Activated naive CD4-positive, alpha-beta T cell treated with anti-CD3 and anti-CD28 coated beads, Interleukin-2, amount 10 ng/mL, durations not matched to agents 7 days and 5 days (primary cell): ENCODE measurements at regions of chr1 and their contacts with region 1.

Region 1: DNA sequence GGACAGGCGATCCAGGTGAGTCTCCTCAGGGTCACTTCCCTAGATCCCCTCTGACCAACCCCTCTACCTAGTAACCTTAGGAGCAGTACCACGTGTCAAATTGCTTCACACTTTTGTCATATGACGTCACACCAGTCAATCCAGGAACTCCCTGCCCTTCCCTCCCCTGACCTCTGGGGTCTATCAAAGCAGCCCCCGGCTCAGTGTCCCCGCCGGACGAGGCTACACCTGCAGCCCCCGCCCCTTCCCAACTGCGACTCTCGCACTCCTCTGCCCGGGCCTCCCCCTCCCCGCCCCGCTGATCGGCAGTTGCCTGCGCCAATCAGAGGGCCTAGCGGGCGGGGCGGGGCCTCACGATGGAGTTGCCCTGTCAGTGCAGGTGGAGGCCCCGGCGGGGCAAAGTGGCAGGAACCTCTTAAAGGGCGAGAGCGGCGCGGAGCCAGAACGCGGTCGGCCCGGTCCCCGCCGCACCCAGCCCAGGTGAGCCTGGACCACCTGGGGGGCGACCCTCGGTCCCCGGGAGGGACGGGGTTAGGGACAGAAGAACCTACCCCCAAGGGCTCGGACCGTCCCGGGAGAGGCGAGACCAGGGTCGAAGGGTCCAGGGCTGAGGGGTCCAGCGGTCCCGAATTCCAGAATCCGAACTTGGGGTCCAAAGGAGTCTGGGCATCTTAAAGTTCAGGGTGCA is 27.5 kb upstream of the EPB41 start:
- DNase-seq: peak; percentile 94
- H3K4me3 Mint-ChIP-seq: peak overlapping the region; percentile 84
- H3K27ac Mint-ChIP-seq: peak overlapping the region; percentile 92
- H3K4me1 Mint-ChIP-seq: peaks cover 69% of the 10 kb centered on the region
- H3K27me3 Mint-ChIP-seq: peaks cover 7% of the 10 kb centered on the region

Region 2: GRCh38 chr1:29033829-29034466 is 147.1 kb after region 1 on chr1:
- CTCF ChIA-PET with region 1: interaction called, 211 read pairs
- DNase-seq: no peak
- H3K4me3 Mint-ChIP-seq: no peak overlapping the region
- H3K27ac Mint-ChIP-seq: no peak overlapping the region
- H3K4me1 Mint-ChIP-seq: peaks cover 3% of the 10 kb centered on the region
- H3K27me3 Mint-ChIP-seq: no peaks in the 10 kb centered on the region

Region 3: GRCh38 chr1:29120961-29121485 is 234.1 kb after region 1 on chr1:
- CTCF ChIA-PET with region 1: interaction called, 23 read pairs
- DNase-seq: peak; percentile 79
- H3K4me3 Mint-ChIP-seq: no peak overlapping the region
- H3K27ac Mint-ChIP-seq: no peak overlapping the region
- H3K4me1 Mint-ChIP-seq: peaks cover 14% of the 10 kb centered on the region
- H3K27me3 Mint-ChIP-seq: peaks cover 59% of the 10 kb centered on the region